HEK293 (cell line): ENCODE measurements at regions of chr1 and their contacts with region 1.

Region 1: DNA sequence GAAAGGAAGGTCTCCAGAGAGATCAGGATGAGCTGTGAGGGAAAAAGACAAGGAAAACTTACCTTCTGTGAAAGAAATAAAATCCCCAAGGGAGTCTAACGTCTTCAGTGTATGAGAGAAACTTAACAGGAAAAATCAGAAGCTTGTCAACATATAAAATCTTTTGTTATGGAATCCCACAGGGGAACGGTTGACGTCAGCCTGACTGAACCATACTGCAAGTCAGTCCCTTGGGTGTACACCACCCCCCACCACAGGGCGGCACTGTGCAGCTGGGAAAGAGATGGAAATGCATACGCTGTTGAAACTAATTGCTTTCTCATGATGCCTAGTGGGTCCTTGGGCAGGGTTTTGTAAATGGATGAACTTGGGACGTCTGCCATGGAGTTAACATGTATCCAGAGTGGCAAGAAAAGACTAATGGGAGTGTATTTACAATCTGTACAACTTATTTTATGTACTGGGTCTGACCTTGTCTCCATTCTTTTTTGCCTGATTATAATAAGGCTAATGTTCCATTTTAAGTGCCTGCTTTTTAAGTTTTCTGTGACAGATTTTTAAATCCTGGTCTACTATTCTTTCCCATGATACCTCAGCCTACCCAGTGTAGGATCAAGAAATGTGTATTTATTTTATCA is 22.7 kb downstream of the UTP25 start:
- H3K4me3 ChIP-seq: no peak overlapping the region
- H3K27ac ChIP-seq: no peak overlapping the region
- H3K4me1 ChIP-seq: 0 out of 2 replicates have a peak, but pooled peaks cover 5% of the 10 kb centered on the region
- CTCF ChIP-seq: peak; percentile 76

Region 2: DNA sequence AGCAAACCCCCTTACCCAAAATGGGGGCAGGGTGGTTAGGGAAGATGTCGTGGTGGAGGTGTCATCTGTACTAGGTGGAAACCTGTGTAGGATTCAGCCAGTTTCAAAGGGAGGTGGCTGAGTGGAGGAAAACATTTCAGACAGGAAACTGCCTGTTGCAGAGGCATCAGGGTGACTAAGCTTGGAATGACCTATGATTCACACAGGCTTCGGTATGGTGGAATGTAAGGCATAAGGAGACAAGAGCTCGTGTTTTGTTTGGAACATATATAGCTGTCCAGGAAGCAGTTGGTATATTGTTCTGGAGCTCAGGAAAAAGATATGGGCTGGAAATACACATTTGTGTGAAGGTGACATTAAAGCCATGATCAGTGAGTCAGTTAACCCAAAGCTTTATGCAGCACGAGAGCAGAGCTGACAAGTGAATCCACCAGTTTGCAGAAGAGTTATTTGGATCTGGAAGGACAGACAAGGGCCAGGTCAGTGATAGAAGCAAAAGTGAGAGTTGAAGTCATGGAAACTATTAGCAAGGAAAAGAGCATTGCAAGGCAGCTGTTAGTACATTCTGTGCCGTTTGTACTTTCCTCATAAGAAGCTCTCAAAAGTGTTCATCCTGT is 10.5 kb before region 1 on chr1:
- CTCF ChIA-PET with region 1: interaction called, 17 read pairs
- POLR2A ChIA-PET with region 1: interaction called, 3 read pairs
- H3K4me3 ChIP-seq: no peak overlapping the region
- H3K27ac ChIP-seq: no peak overlapping the region
- H3K4me1 ChIP-seq: no peaks in the 10 kb centered on the region
- CTCF ChIP-seq: no peak